ENCODE measurements at regions of chr12 and their contacts with region 1.

Region 1: GRCh38 chr12:132887513-132888351 is at the start of gene CHFR:
- DNase-seq: peak; percentile 96 to 99
- H3K4me3 ChIP-seq: peak within 1 kb of the TSS; percentile 89
- CTCF ChIP-seq: no peak
- POLR2A ChIP-seq: peak in 1 of 2 donors; percentile 19
- total RNA-seq, gene CHFR: 27.2 to 34.7 (median 30.6) TPM

Region 2: GRCh38 chr12:132828706-132829534 is 58.8 kb before region 1 on chr12 and contains the start of gene GOLGA3:
- intact Hi-C with region 1: loop called (anchors 10 kb)
- DNase-seq: peak; percentile 90 to 98
- H3K4me3 ChIP-seq: peak within 1 kb of the TSS; percentile 95
- CTCF ChIP-seq: no peak
- POLR2A ChIP-seq: no peak
- total RNA-seq, gene GOLGA3: 44.5 to 81.0 (median 74.7) TPM